IMR-90 (cell line): ENCODE measurements at regions of chr7 and their contacts with region 1.

Region 1: DNA sequence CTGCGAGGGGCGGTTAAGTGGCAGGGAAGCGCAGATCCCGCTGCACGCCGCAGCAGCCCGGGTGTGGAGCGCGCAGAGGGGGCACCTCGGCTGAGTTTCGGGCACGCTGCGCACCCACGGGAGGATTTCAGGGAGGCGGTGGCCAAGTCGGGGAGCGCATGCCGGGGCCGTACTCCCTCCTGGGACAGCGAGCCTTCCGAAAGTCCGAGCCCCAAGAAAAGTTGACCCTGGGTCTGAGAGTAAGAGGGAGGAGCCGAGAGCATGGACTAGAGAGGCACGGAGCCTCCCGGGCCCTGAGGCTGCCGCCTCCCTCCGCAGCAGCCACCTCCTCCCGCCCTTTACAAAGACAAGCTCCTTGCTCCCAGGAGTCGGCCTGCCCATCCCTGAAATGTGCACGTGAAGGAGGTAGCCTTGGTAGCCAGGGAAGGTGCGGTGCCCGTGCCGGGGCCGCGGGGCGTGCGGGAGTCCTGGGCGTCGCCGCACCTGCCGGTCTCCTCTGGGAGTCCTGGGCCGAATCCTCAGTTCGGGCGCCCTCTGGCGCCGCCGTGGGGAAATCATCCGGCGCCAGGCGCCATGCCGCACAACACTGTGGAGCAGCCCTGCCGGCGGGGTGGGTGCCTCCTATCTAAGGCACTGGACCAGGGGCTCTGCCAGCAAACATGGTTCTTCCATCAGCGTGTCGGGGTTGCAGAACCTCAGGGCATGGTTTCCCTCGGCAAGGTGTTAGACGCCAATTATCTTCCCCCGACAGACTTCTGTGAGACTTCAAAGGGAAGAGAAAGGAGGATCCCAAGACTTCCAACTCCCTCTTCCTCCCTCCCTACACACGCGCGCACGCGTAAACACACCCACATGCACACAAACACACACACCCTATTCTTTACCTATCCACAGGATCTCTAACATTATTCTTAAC is 104.0 kb downstream of the TRIL start:
- DNase-seq: peak; percentile 46
- ATAC-seq: peak; percentile 78
- H3K4me3 ChIP-seq: peak overlapping the region; percentile 41
- H3K27ac ChIP-seq: no peak overlapping the region
- H3K4me1 ChIP-seq: peaks cover 9% of the 10 kb centered on the region
- H3K27me3 ChIP-seq: peaks cover 17% of the 10 kb centered on the region
- CTCF ChIP-seq: peak; percentile 73
- POLR2A ChIP-seq: no peak
- RAD21 ChIP-seq: peak; percentile 71

Region 2: DNA sequence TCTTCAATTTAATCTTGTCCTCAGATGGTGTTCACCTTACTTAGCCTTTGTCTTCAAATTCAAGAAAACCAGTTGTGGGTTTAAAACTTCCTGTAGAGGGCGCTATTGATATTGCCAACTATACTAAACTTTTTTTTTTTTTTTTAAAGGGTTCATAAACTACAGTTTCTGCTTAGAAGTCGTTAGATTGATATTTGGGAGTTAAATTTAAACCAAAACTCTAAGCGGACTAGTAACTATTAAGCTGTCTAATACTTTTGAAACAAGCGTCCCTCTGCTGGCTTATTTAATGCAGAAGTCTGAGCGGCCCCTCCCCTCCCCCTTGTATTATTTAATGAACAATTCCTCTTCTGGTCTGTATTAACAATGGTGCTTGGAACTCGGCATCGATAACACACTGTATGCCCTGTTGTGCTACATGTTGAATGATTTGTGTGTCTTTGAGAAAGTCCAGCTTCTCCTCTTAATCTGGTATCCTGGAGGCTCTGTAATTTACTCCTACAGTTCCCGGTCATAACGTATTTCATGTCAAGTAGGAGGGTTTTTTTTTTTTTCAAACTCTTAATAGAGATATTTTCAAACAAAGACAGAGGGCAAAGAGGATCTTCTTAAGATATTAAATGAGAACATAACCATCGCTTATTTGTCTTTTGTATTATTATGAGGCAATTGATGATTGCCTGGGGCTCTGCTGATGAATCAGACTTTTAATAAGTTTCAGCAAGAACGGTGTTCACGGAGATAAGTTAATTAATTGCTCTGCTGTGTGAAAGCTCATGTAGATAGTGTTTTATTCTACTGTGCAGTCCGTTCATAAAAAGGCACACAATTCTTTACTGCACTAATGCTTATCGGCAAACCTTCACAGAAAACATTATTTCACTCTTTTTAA is 464.3 kb before region 1 on chr7:
- CTCF ChIA-PET with region 1: no interaction called
- POLR2A ChIA-PET with region 1: no interaction called
- dilution Hi-C with region 1: no loop called
- in situ Hi-C with region 1: loop called (anchors 10 kb)
- intact Hi-C with region 1: loop called (anchors 1 kb)
- DNase-seq: peak; percentile 79
- ATAC-seq: peak; percentile 75
- H3K4me3 ChIP-seq: peak overlapping the region; percentile 34; the same call in 1 of the 2 replicates
- H3K27ac ChIP-seq: no peak overlapping the region
- H3K4me1 ChIP-seq: 0 out of 2 replicates have a peak, but pooled peaks cover 2% of the 10 kb centered on the region
- H3K27me3 ChIP-seq: peaks cover 7% of the 10 kb centered on the region; the same call in 1 of the 2 replicates
- CTCF ChIP-seq: peak; percentile 80
- POLR2A ChIP-seq: no peak
- RAD21 ChIP-seq: peak; percentile 80

Region 3: GRCh38 chr7:28408960-28409715 is 445.0 kb before region 1 on chr7:
- CTCF ChIA-PET with region 1: no interaction called
- POLR2A ChIA-PET with region 1: no interaction called
- dilution Hi-C with region 1: no loop called
- in situ Hi-C with region 1: no loop called
- intact Hi-C with region 1: loop called (anchors 5 kb)
- DNase-seq: peak; percentile 98
- ATAC-seq: peak; percentile 90
- H3K4me3 ChIP-seq: peak overlapping the region; percentile 66
- H3K27ac ChIP-seq: peak overlapping the region; percentile 78
- H3K4me1 ChIP-seq: peaks cover 7% of the 10 kb centered on the region; the same call in 1 of the 2 replicates
- H3K27me3 ChIP-seq: no peaks in the 10 kb centered on the region
- CTCF ChIP-seq: no peak
- POLR2A ChIP-seq: peak; percentile 95
- RAD21 ChIP-seq: no peak

Region 4: DNA sequence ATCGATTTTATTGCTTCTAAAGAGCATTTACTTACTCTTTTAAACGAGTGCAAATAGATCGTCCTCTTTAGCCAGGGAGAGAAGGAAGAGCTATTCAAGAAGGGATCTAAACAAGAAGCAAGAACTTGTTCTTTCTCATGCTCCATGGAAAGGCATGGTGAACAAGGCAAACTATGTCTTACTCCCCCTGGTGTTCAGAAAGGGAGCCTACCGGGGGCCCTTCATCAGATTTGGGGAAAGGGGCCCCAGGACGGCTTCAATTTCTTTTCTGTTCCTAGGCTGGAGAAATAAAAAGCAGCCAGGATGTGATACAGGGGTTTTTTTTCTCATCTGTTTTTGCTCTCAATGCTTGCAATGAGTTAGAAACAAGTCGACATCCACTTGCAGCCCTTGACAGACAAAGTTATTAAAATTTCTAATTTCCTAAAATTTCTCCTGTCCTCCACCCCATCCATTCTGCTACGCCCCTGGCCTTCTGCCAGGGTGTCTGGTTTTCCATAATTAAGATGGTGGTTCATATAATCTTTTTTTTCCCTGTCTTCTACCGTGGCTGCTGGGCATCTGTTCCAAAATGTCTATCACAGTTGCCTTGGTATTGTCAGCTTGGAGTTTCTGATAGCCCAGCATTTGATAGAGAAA is 227.3 kb before region 1 on chr7:
- CTCF ChIA-PET with region 1: no interaction called
- POLR2A ChIA-PET with region 1: no interaction called
- dilution Hi-C with region 1: no loop called
- in situ Hi-C with region 1: no loop called
- intact Hi-C with region 1: loop called (anchors 5 kb)
- DNase-seq: peak; percentile 36
- ATAC-seq: peak; percentile 38; the same call in 1 of the 2 replicates
- H3K4me3 ChIP-seq: no peak overlapping the region
- H3K27ac ChIP-seq: no peak overlapping the region
- H3K4me1 ChIP-seq: peaks cover 6% of the 10 kb centered on the region
- H3K27me3 ChIP-seq: no peaks in the 10 kb centered on the region
- CTCF ChIP-seq: peak; percentile 52
- POLR2A ChIP-seq: no peak
- RAD21 ChIP-seq: peak; percentile 51

Region 5: DNA sequence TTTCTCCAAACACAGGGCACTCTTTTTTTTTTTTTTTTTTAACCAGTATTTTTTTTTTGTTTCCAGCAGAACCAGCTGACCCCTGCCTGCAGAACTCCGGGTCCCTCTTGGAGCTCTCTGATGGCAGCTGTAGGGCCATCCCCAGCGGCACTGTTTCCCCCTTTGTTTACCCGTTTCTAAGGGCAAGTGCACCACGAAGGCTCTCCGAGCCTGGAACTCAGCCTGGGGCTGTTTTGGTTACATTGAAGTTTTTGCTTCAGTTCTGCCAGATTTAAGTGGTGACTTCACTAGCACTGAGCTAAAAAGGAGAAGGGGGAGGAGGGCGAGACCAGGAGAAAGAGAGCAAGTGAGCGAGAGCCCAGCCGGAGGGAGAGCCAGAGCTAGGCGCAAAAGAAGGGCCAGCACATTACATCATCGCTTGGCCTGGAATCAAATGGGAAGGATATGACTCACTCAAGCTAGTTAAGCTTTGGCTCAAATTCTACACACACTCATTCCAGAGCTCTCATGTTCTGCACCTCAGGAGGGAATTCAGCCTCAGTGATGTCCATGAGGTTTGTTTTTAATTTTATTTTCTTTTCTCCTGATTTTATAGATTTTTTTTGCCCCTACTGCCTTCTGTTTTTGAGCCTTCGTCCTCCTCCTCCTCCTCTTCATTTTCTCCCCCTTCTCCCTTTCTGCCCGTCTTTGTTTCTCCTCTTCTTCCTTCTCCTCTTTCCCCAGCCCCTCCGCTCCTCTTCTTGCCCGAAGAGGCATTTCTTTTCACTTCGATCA is 168.3 kb before region 1 on chr7:
- CTCF ChIA-PET with region 1: interaction called, 3 read pairs
- POLR2A ChIA-PET with region 1: no interaction called
- dilution Hi-C with region 1: no loop called
- in situ Hi-C with region 1: no loop called
- intact Hi-C with region 1: loop called (anchors 1 kb)
- DNase-seq: peak; percentile 99
- ATAC-seq: peak; percentile 96
- H3K4me3 ChIP-seq: peak overlapping the region; percentile 45
- H3K27ac ChIP-seq: peak overlapping the region; percentile 71
- H3K4me1 ChIP-seq: peaks cover 4% of the 10 kb centered on the region
- H3K27me3 ChIP-seq: no peaks in the 10 kb centered on the region
- CTCF ChIP-seq: no peak
- POLR2A ChIP-seq: peak; percentile 93
- RAD21 ChIP-seq: 0 out of 2 replicates have a peak, but pooled peaks have one; percentile 4

Region 6: GRCh38 chr7:28835800-28836199 is 18.3 kb before region 1 on chr7:
- CTCF ChIA-PET with region 1: interaction called, 4 read pairs
- POLR2A ChIA-PET with region 1: no interaction called
- dilution Hi-C with region 1: no loop called
- in situ Hi-C with region 1: no loop called
- intact Hi-C with region 1: loop called (anchors 2 kb)
- DNase-seq: peak; percentile 75
- ATAC-seq: peak; percentile 72
- H3K4me3 ChIP-seq: no peak overlapping the region
- H3K27ac ChIP-seq: no peak overlapping the region
- H3K4me1 ChIP-seq: 0 out of 2 replicates have a peak, but pooled peaks cover 2% of the 10 kb centered on the region
- H3K27me3 ChIP-seq: peaks cover 8% of the 10 kb centered on the region; the same call in 1 of the 2 replicates
- CTCF ChIP-seq: no peak
- POLR2A ChIP-seq: no peak
- RAD21 ChIP-seq: no peak